GM10248 (cell line): ENCODE measurements at regions of chr17 and their contacts with region 1.

Region 1: DNA sequence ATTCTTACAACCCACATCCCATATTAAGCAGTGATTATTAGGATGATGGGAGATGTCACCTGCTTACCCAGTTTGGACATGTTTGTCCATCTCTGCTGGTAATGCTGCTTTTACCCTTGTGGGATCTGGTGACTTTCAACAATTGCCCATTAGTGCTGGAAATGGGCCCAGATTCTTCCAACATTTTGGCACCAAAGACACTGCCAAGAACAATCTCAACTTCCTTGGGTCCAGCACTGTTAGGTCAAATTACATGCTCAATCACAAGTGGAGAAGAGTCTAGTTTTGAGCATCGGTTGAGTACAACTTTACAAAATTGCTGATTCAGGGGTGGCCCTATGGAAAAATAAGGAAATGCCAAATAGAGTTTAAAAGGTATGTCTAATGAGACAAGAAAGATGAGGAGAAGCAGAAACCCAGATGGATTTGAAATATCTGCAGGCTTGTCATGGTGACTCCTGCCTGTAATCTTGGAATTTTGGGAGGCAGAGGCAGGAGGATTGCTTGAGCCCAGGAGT is 13.0 kb upstream of the ZFP3 start:
- DNase-seq: no peak
- CTCF ChIP-seq: no peak

Region 2: GRCh38 chr17:4908301-4908700 is 157.0 kb before region 1 on chr17:
- CTCF ChIA-PET with region 1: interaction called, 30 read pairs
- POLR2A ChIA-PET with region 1: no interaction called
- DNase-seq: no peak
- CTCF ChIP-seq: no peak

Region 3: GRCh38 chr17:4948931-4949320 is 116.4 kb before region 1 on chr17:
- CTCF ChIA-PET with region 1: interaction called, 11 read pairs
- POLR2A ChIA-PET with region 1: no interaction called
- DNase-seq: peak; percentile 86
- CTCF ChIP-seq: no peak

Region 4: DNA sequence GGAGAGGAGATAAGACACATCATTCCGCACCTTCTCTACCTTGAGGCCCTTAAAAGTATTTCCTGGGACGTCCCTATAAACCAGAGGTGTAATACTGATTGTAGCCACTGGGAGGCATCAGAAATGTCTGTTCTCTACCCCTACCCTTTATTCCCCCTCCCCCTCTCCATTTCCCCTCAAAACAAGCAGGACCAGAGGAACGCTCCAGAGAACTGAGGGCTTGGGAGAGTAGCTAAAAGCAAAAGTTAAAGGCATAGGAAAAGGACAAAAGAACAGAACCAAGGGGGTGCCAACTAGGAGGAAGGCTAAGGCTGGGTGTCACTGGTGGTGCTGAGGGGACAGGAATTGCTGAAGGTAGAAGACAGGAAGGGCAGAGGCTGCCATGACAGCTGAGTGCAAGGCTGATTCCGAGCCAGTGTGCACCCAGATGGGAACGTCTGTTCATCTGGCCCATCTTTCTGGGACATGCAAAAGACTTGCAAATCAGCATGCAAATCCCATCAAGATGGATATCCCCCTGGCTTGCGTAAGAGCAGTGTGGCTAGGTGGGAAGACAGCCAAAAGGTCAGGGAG is 84.6 kb before region 1 on chr17:
- CTCF ChIA-PET with region 1: interaction called, 31 read pairs
- POLR2A ChIA-PET with region 1: interaction called, 4 read pairs
- DNase-seq: peak; percentile 69
- CTCF ChIP-seq: peak; percentile 36

Region 5: DNA sequence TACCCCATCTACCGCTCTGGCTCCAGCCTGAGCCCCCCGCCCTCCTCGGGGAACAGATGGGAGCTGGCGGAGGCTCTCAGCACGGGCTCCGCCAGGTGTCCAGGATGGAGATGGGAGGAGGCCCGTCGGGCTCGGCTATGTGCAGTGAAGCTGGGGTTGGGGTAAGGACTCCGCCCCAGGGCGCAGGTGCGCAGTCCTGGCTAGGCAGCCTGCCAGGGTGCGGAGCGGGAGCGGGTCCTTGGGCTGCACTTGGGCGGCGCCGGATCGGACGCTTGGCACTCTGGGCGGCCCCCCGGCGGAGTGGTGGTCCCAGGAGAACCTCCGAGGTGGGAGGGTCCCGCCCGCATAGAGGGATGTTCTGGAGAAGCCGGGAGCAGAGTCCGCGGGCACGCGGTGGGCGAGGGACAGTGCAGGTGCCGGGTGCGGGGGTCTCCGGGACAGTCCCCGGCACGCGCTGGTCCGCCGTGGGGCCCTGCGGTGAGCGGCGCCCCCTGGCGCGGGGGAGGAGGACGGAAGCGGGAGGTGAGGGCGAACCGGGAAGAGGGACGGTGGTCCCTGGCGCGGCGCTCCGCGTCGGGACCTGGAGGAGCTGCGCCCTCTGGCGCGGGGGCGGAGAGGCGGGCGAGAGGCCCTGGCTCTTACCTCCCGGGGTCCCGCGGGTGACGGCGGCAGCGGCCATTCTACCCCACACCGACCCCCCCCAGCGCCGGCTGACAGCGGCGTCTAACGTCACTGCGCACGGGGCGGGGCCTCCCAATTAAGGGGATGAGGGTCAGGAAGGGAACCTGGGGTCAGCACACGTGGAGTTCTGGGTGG is 78.1 kb before region 1 on chr17 and contains the start of gene CAMTA2:
- CTCF ChIA-PET with region 1: interaction called, 10 read pairs
- POLR2A ChIA-PET with region 1: no interaction called
- DNase-seq: peak; percentile 90
- CTCF ChIP-seq: peak; percentile 80

Region 6: GRCh38 chr17:5031365-5032082 is 33.8 kb before region 1 on chr17:
- CTCF ChIA-PET with region 1: interaction called, 52 read pairs
- POLR2A ChIA-PET with region 1: interaction called, 4 read pairs
- DNase-seq: peak; percentile 91
- CTCF ChIP-seq: peak; percentile 73

Region 7: GRCh38 chr17:5049314-5049895 is 15.9 kb before region 1 on chr17:
- CTCF ChIA-PET with region 1: interaction called, 18 read pairs
- POLR2A ChIA-PET with region 1: no interaction called
- DNase-seq: no peak
- CTCF ChIP-seq: no peak

Region 8: GRCh38 chr17:5281814-5282653 is 216.7 kb after region 1 on chr17 and contains the start of gene RABEP1:
- CTCF ChIA-PET with region 1: no interaction called
- POLR2A ChIA-PET with region 1: no interaction called
- DNase-seq: peak; percentile 96
- CTCF ChIP-seq: no peak

Region 9: DNA sequence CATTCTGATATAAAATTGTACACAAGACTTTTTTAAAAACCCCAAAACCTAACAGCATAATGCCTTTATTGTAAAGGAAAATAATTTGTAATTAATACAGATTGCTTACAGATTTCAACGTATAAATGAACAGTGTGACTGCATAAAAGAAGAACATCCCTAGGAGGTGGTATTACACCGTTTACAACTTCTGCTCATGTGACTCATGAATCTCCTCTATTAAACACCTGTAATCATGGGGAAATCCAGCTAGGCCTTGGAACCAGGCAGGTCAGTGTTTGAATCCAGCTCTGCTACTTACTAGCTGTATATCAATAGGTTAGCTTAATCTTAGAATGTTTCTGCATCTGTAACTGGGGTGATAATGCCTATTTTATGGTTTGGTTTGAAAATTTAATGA is 232.0 kb after region 1 on chr17:
- CTCF ChIA-PET with region 1: no interaction called
- POLR2A ChIA-PET with region 1: no interaction called
- DNase-seq: no peak
- CTCF ChIP-seq: no peak